PC-3 (cell line): ENCODE measurements at regions of chr14 and their contacts with region 1.

Region 1: GRCh38 chr14:61296719-61297502 is 15.8 kb upstream of the TMEM30B start:
- DNase-seq: peak; percentile 87
- ATAC-seq: peak; percentile 84
- H3K4me3 ChIP-seq: no peak overlapping the region
- H3K27ac ChIP-seq: no peak overlapping the region
- H3K4me1 ChIP-seq: no peaks in the 10 kb centered on the region
- H3K27me3 ChIP-seq: no peaks in the 10 kb centered on the region
- CTCF ChIP-seq: peak; percentile 96

Region 2: DNA sequence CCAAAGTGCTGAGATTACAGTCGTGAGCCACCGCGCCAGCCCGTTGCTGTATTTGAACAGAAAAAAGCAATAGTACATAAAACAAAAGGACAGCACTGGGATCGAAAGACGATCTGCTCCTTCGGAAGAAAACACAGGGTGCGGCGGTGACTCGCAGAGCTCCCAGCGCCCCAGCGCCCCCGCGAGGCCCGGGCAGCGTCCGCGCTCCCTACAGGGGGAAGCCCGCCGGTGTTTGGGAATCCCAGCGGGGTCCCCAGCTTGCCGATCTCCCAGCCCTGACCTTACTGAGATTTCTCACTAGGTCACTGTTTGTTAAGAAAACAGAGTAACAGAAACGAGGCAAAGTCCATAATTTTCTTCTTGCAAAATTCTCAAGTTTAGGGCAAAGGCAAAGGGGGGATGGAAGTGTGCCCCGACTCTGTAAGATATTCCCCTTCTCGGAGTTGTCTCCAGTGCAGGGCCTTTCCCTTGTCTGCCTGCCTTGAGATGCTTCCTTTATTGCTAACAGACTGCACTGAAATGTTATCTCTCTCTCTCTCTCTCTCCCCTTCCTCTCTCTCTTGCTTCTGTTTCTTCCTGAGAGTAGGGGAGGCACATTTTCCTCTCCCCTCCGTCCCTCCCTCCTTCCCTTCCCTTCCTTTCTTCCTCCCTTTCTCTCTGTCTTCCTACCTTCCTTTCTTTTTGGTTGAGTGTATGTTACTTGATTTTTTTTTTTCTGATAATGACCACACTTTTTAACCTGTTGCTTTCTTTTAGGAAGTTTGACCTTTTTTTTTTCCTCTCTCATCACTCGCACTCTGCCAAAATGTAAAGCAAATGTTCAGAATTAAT is 107.7 kb before region 1 on chr14:
- CTCF ChIA-PET with region 1: no interaction called
- POLR2A ChIA-PET with region 1: no interaction called
- intact Hi-C with region 1: no loop called
- DNase-seq: peak; percentile 84
- ATAC-seq: peak; percentile 91
- H3K4me3 ChIP-seq: peak overlapping the region; percentile 65
- H3K27ac ChIP-seq: no peak overlapping the region
- H3K4me1 ChIP-seq: peaks cover 16% of the 10 kb centered on the region
- H3K27me3 ChIP-seq: no peaks in the 10 kb centered on the region
- CTCF ChIP-seq: peak; percentile 90

Region 3: DNA sequence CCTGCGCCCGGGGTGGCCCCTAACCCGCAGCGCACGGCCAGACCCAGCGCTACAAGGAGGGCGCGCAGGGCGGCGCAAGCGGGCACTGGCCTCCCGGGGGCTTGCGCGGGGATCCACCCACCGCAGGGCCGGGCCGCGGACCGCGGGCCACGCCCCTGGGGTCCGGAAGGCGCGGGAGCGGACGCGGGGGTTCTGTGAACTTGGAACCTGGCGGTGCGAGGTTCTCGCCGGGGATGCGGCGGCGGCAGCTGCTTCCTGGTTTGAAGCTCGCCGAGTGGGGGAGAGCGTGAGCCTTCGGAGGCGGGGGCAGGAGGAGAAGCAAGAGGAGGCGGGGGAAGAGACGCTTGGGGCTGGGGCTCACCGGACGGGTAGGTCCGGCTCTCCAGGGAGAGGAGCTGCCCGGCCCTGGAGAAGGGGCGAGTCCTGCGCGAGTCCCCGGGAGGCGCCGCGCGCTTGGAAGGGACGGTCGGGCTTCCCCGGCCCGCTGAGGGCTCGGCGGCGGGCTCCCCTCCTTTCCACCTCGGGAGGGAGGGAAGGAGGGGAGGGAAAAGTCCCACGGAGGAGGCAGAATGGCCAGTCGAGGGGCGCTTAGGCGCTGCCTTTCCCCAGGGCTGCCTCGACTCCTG is 24.6 kb after region 1 on chr14 and contains the start of gene PRKCH:
- CTCF ChIA-PET with region 1: interaction called, 3 read pairs
- POLR2A ChIA-PET with region 1: no interaction called
- intact Hi-C with region 1: loop called (anchors 1 kb)
- DNase-seq: peak; percentile 90
- ATAC-seq: peak; percentile 71
- H3K4me3 ChIP-seq: peak within 1 kb of the TSS; percentile 72
- H3K27ac ChIP-seq: peak within 1 kb of the TSS; percentile 44
- H3K4me1 ChIP-seq: peaks cover 23% of the 10 kb centered on the region
- H3K27me3 ChIP-seq: no peaks in the 10 kb centered on the region
- CTCF ChIP-seq: peak; percentile 58
- total RNA-seq, gene PRKCH: 80.8 and 170 TPM in 2 replicates

Region 4: GRCh38 chr14:61381547-61381946 is 84.6 kb after region 1 on chr14:
- CTCF ChIA-PET with region 1: no interaction called
- POLR2A ChIA-PET with region 1: no interaction called
- intact Hi-C with region 1: no loop called
- DNase-seq: no peak
- ATAC-seq: peak; percentile 14; the same call in 1 of the 2 replicates
- H3K4me3 ChIP-seq: no peak overlapping the region
- H3K27ac ChIP-seq: no peak overlapping the region
- H3K4me1 ChIP-seq: no peaks in the 10 kb centered on the region
- H3K27me3 ChIP-seq: no peaks in the 10 kb centered on the region
- CTCF ChIP-seq: no peak

Region 5: GRCh38 chr14:61456720-61457119 is 159.8 kb after region 1 on chr14:
- CTCF ChIA-PET with region 1: interaction called, 4 read pairs
- POLR2A ChIA-PET with region 1: no interaction called
- intact Hi-C with region 1: loop called (anchors 1 kb)
- DNase-seq: peak; percentile 95
- ATAC-seq: peak; percentile 88
- H3K4me3 ChIP-seq: no peak overlapping the region
- H3K27ac ChIP-seq: no peak overlapping the region
- H3K4me1 ChIP-seq: peaks cover 13% of the 10 kb centered on the region
- H3K27me3 ChIP-seq: no peaks in the 10 kb centered on the region
- CTCF ChIP-seq: peak; percentile 96

Region 6: DNA sequence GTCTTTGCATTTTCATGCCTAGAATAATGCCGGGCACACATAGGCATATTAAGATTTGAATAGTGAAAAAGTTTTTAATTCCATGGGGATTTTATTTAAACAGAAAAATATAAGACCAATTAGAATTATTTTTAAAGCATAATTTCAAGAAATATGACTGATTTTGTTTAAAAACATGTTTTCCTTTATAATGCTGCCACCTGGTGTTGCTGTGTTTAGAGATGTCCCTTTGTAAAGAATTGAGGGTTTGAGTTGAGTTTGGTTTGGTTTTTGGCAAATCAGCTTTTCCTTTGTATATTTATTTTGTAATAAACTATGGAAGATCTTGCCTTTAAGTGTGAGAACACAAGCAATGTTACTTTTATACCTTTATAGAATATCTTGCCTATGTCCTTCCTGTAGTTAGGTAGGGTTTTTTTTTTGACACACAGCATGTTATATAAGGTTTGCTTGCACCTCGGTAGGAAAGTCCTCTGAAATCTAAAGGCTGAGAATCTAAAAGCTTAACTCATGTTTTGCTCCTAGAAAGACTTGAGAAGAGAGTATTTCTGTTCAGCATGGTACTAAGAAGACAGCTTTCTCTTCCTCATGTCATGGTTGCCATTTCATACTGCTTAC is 434.0 kb after region 1 on chr14:
- CTCF ChIA-PET with region 1: interaction called, 3 read pairs
- POLR2A ChIA-PET with region 1: no interaction called
- intact Hi-C with region 1: loop called (anchors 1 kb)
- DNase-seq: peak; percentile 68
- ATAC-seq: no peak
- H3K4me3 ChIP-seq: no peak overlapping the region
- H3K27ac ChIP-seq: peak overlapping the region; percentile 19
- H3K4me1 ChIP-seq: peaks cover 17% of the 10 kb centered on the region
- H3K27me3 ChIP-seq: no peaks in the 10 kb centered on the region
- CTCF ChIP-seq: peak; percentile 83

Region 7: GRCh38 chr14:61973868-61974321 is 677.0 kb after region 1 on chr14:
- CTCF ChIA-PET with region 1: no interaction called
- POLR2A ChIA-PET with region 1: no interaction called
- intact Hi-C with region 1: no loop called
- DNase-seq: peak; percentile 10
- ATAC-seq: no peak
- H3K4me3 ChIP-seq: no peak overlapping the region
- H3K27ac ChIP-seq: no peak overlapping the region
- H3K4me1 ChIP-seq: 0 out of 2 replicates have a peak, but pooled peaks cover under 1% of the 10 kb centered on the region
- H3K27me3 ChIP-seq: no peaks in the 10 kb centered on the region
- CTCF ChIP-seq: no peak